B cell (primary cell): ENCODE measurements at regions of chr11 and their contacts with region 1.

Region 1: DNA sequence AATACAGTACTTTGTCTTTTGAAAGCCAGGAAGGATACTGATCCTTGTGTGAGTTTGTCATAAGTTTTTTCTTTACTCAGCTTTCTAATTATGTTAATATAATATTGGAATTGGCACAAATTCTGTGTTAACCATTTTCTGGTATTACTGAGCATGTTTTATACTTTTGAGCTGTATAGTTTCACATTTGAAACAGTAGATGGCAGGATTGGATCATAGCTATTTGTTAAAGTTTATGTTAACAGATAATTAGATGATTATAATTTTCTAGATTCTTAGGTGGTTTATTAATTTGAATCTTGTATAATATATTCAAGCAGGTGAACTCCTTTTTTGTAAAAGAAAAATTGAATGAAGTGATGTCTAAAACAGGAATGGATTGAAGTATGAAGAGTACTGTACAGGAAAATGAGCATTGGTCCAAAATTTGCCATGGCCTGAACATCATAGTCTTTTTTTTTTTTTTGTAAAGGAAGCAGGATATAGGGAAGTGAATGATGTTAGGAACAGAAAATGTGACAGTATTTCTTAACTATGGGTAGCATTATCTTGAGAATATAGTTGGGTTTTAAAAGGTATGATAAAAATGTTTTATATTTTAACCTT is 102.0 kb downstream of the CYP2R1 start:
- DNase-seq: peak; percentile 42
- ATAC-seq: no peak
- H3K4me3 ChIP-seq: no peak overlapping the region
- H3K4me3 Mint-ChIP-seq: no peak overlapping the region
- H3K27ac ChIP-seq: no peak overlapping the region
- H3K27ac Mint-ChIP-seq: no peak overlapping the region
- H3K4me1 ChIP-seq: no peaks in the 10 kb centered on the region
- H3K4me1 Mint-ChIP-seq: no peaks in the 10 kb centered on the region
- H3K27me3 ChIP-seq: no peaks in the 10 kb centered on the region
- H3K27me3 Mint-ChIP-seq: no peaks in the 10 kb centered on the region
- CTCF ChIP-seq: peak; percentile 78

Region 2: GRCh38 chr11:14413307-14414069 is 376.5 kb before region 1 on chr11:
- CTCF ChIA-PET with region 1: no interaction called
- POLR2A ChIA-PET with region 1: no interaction called
- intact Hi-C with region 1: no loop called
- DNase-seq: no peak
- ATAC-seq: no peak
- H3K4me3 ChIP-seq: no peak overlapping the region
- H3K4me3 Mint-ChIP-seq: no peak overlapping the region
- H3K27ac ChIP-seq: no peak overlapping the region
- H3K27ac Mint-ChIP-seq: no peak overlapping the region
- H3K4me1 ChIP-seq: peaks cover 11 to 13% of the 10 kb centered on the region in 2 donors
- H3K4me1 Mint-ChIP-seq: peaks cover 15% of the 10 kb centered on the region
- H3K27me3 ChIP-seq: no peaks in the 10 kb centered on the region
- H3K27me3 Mint-ChIP-seq: no peaks in the 10 kb centered on the region
- CTCF ChIP-seq: no peak

Region 3: GRCh38 chr11:14537134-14537599 is 252.8 kb before region 1 on chr11:
- CTCF ChIA-PET with region 1: interaction called, 7 read pairs
- POLR2A ChIA-PET with region 1: no interaction called
- intact Hi-C with region 1: loop called (anchors 5 kb)
- DNase-seq: peak; percentile 77
- ATAC-seq: peak; percentile 83
- H3K4me3 ChIP-seq: peak overlapping the region in 3 of 5 experiments; percentile 8 to 58 (median 12)
- H3K4me3 Mint-ChIP-seq: peak overlapping the region; percentile 82
- H3K27ac ChIP-seq: peak overlapping the region; percentile 22 to 69
- H3K27ac Mint-ChIP-seq: no peak overlapping the region
- H3K4me1 ChIP-seq: no peaks in the 10 kb centered on the region
- H3K4me1 Mint-ChIP-seq: peaks cover 7% of the 10 kb centered on the region
- H3K27me3 ChIP-seq: no peaks in the 10 kb centered on the region
- H3K27me3 Mint-ChIP-seq: peaks cover 4% of the 10 kb centered on the region
- CTCF ChIP-seq: peak; percentile 92

Region 4: DNA sequence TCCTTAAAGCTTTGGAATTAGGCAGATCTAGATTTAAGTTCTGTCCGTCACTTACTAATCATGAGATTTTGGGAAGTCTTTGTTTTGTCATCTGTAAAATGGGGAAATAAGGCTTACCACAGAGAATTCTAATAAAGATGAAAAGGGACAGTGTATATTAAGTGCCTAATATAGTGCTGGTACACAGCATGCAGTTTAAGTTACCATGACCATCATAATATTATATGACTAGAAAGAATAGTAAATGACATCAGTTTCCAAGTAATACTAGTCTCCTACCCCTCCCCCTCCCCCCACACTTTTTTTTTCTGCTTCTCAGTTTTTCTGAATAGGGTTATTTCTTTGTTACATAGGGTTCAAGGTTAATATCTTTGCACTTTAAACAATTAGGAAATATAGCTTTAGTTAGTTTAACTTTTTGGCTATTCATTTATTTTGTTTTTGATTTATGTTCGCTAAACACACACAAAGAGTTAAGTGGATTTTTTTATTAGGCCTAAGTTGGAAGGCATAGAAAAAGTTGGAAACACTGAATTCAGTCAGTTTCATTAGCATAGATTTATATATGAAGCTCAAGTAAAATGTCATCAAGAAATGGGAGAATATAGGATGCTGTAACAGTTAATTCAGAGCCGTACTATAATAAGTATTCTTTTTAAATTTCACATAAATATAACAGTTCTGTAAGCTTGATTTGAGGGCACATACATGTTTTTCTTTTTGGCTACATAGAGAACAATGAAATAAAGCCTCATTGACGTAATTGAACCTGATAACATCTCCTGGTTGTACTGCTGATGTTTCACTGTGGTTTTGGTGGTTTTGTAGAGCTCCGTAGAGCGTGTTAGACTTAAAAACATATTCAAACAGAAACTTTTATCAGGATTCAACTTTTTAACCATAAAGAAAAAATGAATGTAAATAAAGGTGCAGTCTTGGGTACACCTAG is 25.1 kb before region 1 on chr11:
- CTCF ChIA-PET with region 1: interaction called, 22 read pairs
- POLR2A ChIA-PET with region 1: interaction called, 5 read pairs
- intact Hi-C with region 1: no loop called
- DNase-seq: peak; percentile 81
- ATAC-seq: peak; percentile 88
- H3K4me3 ChIP-seq: peak overlapping the region in 1 of 5 experiments; percentile 0
- H3K4me3 Mint-ChIP-seq: peak overlapping the region; percentile 30
- H3K27ac ChIP-seq: peak overlapping the region; percentile 1 to 8
- H3K27ac Mint-ChIP-seq: peak overlapping the region; percentile 7
- H3K4me1 ChIP-seq: peaks cover 17 to 25% of the 10 kb centered on the region in 2 donors
- H3K4me1 Mint-ChIP-seq: peaks cover 18% of the 10 kb centered on the region
- H3K27me3 ChIP-seq: peaks cover 0 to 6% (median 5%) of the 10 kb centered on the region in 4 experiments
- H3K27me3 Mint-ChIP-seq: no peaks in the 10 kb centered on the region
- CTCF ChIP-seq: no peak

Region 5: GRCh38 chr11:14892036-14892567 is 102.1 kb after region 1 on chr11 and contains the start of gene CYP2R1:
- CTCF ChIA-PET with region 1: interaction called, 18 read pairs
- POLR2A ChIA-PET with region 1: interaction called, 3 read pairs
- intact Hi-C with region 1: no loop called
- DNase-seq: peak; percentile 93
- ATAC-seq: peak; percentile 85
- H3K4me3 ChIP-seq: peak within 1 kb of the TSS; percentile 82 to 91 (median 87)
- H3K4me3 Mint-ChIP-seq: peak within 1 kb of the TSS; percentile 99
- H3K27ac ChIP-seq: peak within 1 kb of the TSS; percentile 78 to 83
- H3K27ac Mint-ChIP-seq: peak within 1 kb of the TSS; percentile 97
- H3K4me1 ChIP-seq: peaks cover 4 to 5% of the 10 kb centered on the region in 2 donors
- H3K4me1 Mint-ChIP-seq: peaks cover 30% of the 10 kb centered on the region
- H3K27me3 ChIP-seq: no peaks in the 10 kb centered on the region
- H3K27me3 Mint-ChIP-seq: no peaks in the 10 kb centered on the region
- CTCF ChIP-seq: no peak
- total RNA-seq, gene CYP2R1: 42.4 and 43.6 TPM in 2 replicates

Region 6: DNA sequence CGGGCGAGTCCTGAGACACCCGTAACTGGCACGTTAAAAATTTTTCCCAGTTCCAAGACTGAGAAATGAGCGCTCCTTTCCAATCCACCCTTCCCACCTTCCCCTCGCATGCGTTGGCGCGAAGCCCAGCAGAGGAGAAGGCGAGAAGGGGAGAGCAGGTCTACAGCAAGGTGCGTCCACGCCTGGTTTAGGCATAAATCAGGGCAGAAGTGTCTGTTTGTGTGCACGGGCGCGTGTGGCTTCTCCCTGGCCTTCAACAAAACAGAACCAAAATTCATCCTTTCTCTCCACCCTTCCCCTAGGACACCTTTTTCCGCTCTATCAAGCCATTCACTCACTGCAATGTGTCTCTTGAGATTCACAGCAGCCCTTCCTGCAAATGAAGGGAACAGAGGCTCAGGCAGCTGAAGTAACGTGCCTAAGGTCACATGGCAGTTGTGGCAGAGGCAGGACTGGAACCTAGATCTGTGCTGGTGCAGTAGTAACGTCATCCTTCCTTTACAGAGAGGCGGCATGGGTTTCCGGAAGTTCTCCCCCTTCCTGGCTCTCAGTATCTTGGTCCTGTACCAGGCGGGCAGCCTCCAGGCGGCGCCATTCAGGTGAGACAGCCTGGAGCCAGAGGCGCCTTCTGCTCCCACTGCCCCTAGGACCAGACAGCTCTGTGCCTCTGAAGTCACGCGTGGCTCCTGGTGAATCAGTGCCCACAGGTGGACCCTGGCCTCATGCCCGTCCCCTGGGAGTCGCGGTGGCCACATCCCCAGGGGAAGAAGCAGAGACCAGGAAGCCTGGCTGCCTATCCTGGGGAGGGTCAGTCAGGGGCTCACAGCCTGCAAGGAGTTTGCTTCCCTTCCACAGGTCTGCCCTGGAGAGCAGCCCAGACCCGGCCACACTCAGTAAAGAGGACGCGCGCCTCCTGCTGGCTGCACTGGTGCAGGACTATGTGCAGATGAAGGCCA is 284.5 kb after region 1 on chr11:
- CTCF ChIA-PET with region 1: interaction called, 21 read pairs
- POLR2A ChIA-PET with region 1: no interaction called
- intact Hi-C with region 1: loop called (anchors 1 kb)
- DNase-seq: peak; percentile 78
- ATAC-seq: peak; percentile 82
- H3K4me3 ChIP-seq: peak overlapping the region in 4 of 5 experiments; percentile 20 to 51 (median 28)
- H3K4me3 Mint-ChIP-seq: peak overlapping the region; percentile 75
- H3K27ac ChIP-seq: no peak overlapping the region
- H3K27ac Mint-ChIP-seq: peak overlapping the region; percentile 41
- H3K4me1 ChIP-seq: peaks cover 19% of the 10 kb centered on the region in 2 donors
- H3K4me1 Mint-ChIP-seq: peaks cover 17% of the 10 kb centered on the region
- H3K27me3 ChIP-seq: peaks cover 0 to 52% (median 16%) of the 10 kb centered on the region in 4 experiments
- H3K27me3 Mint-ChIP-seq: peaks cover 60% of the 10 kb centered on the region
- CTCF ChIP-seq: peak; percentile 75